ENCODE measurements at regions of chr1 and their contacts with region 1.

Region 1: GRCh38 chr1:227946624-227947385 is 927 bp downstream of the WNT9A start:
- DNase-seq: peak; percentile 84 to 92 (median 88)
- ATAC-seq: peak; percentile 87
- H3K4me3 ChIP-seq: no peak overlapping the region
- H3K4me1 ChIP-seq: peaks cover 25% of the 10 kb centered on the region
- CTCF ChIP-seq: peak; percentile 79

Region 2: GRCh38 chr1:227489572-227489971 is 457.2 kb before region 1 on chr1:
- intact Hi-C with region 1: loop called in 1 of 2 experiments (anchors 10 kb)
- DNase-seq: no peak
- ATAC-seq: no peak
- H3K4me3 ChIP-seq: no peak overlapping the region
- H3K4me1 ChIP-seq: no peaks in the 10 kb centered on the region
- CTCF ChIP-seq: no peak

Region 3: GRCh38 chr1:227762233-227762911 is 184.4 kb before region 1 on chr1:
- intact Hi-C with region 1: loop called (anchors 5 to 10 kb)
- DNase-seq: peak; percentile 89 to 91 (median 89)
- ATAC-seq: peak; percentile 86
- H3K4me3 ChIP-seq: no peak overlapping the region
- H3K4me1 ChIP-seq: peaks cover 21% of the 10 kb centered on the region
- CTCF ChIP-seq: peak; percentile 80